Adrenal gland (tissue), 19 donors: ENCODE measurements at regions of chr10 and their contacts with region 1.

Region 1: DNA sequence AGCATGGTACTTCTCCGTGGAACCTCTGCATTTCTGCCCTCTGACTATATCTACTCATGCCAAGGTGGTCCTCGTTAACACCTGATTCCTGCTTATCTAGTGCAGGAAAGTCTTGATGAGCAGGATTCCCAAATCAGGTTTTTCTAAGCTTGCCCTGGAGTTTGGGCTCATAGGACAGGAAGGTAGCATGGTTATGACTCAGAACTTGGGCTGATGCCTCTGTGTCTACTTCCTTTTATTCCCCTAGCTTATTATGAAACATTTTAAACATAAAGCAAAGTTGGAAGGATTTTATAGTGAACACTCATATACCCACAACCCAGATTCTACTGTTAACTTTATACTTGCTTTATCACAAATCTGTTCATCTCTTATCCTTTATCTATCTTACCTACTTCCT is 5.6 kb downstream of the SUFU start:
- DNase-seq: peak in 1 of 7 donors; percentile 22
- H3K4me3 ChIP-seq: no peak overlapping the region
- H3K27ac ChIP-seq: no peak overlapping the region
- H3K4me1 ChIP-seq: peaks cover 0 to 8% of the 10 kb centered on the region in 2 donors
- H3K27me3 ChIP-seq: no peaks in the 10 kb centered on the region
- CTCF ChIP-seq: no peak
- POLR2A ChIP-seq: no peak

Region 2: GRCh38 chr10:102583435-102584417 is 74.3 kb after region 1 on chr10:
- intact Hi-C with region 1: loop called (anchors 5 kb)
- DNase-seq: peak; percentile 86 to 97 (median 91)
- H3K4me3 ChIP-seq: no peak overlapping the region
- H3K27ac ChIP-seq: peak overlapping the region in 2 of 5 donors; percentile 3 to 10
- H3K4me1 ChIP-seq: peaks cover 0 to 13% of the 10 kb centered on the region in 2 donors
- H3K27me3 ChIP-seq: no peaks in the 10 kb centered on the region
- CTCF ChIP-seq: peak; percentile 78 to 94 (median 88)
- POLR2A ChIP-seq: no peak

Region 3: GRCh38 chr10:102691285-102692066 is 182.1 kb after region 1 on chr10:
- intact Hi-C with region 1: no loop called
- DNase-seq: no peak
- H3K4me3 ChIP-seq: no peak overlapping the region
- H3K27ac ChIP-seq: no peak overlapping the region
- H3K4me1 ChIP-seq: no peaks in the 10 kb centered on the region
- H3K27me3 ChIP-seq: no peaks in the 10 kb centered on the region
- CTCF ChIP-seq: no peak
- POLR2A ChIP-seq: no peak

Region 4: GRCh38 chr10:103080891-103081581 is 571.6 kb after region 1 on chr10:
- intact Hi-C with region 1: no loop called
- DNase-seq: no peak
- H3K4me3 ChIP-seq: no peak overlapping the region
- H3K27ac ChIP-seq: no peak overlapping the region
- H3K4me1 ChIP-seq: no peaks in the 10 kb centered on the region
- H3K27me3 ChIP-seq: no peaks in the 10 kb centered on the region
- CTCF ChIP-seq: no peak
- POLR2A ChIP-seq: no peak